IMR-90 (cell line): ENCODE measurements at regions of chr2 and their contacts with region 1.

Region 1: GRCh38 chr2:14634201-14634884 is 1.8 kb downstream of the LRATD1 start:
- DNase-seq: peak; percentile 54
- ATAC-seq: peak; percentile 62
- H3K4me3 ChIP-seq: peak overlapping the region; percentile 38
- H3K27ac ChIP-seq: no peak overlapping the region
- H3K4me1 ChIP-seq: no peaks in the 10 kb centered on the region; the same call in 1 of the 2 replicates
- H3K27me3 ChIP-seq: peaks cover 25% of the 10 kb centered on the region
- CTCF ChIP-seq: peak; percentile 62
- POLR2A ChIP-seq: no peak
- RAD21 ChIP-seq: peak; percentile 61

Region 2: GRCh38 chr2:14428056-14428455 is 206.3 kb before region 1 on chr2:
- CTCF ChIA-PET with region 1: no interaction called
- POLR2A ChIA-PET with region 1: no interaction called
- dilution Hi-C with region 1: no loop called
- in situ Hi-C with region 1: no loop called
- intact Hi-C with region 1: loop called (anchors 5 kb)
- DNase-seq: peak; percentile 53
- ATAC-seq: peak; percentile 40; the same call in 1 of the 2 replicates
- H3K4me3 ChIP-seq: no peak overlapping the region
- H3K27ac ChIP-seq: no peak overlapping the region
- H3K4me1 ChIP-seq: no peaks in the 10 kb centered on the region
- H3K27me3 ChIP-seq: no peaks in the 10 kb centered on the region
- CTCF ChIP-seq: peak; percentile 44
- POLR2A ChIP-seq: no peak
- RAD21 ChIP-seq: peak; percentile 64

Region 3: GRCh38 chr2:14492920-14493503 is 141.3 kb before region 1 on chr2:
- CTCF ChIA-PET with region 1: no interaction called
- POLR2A ChIA-PET with region 1: no interaction called
- dilution Hi-C with region 1: no loop called
- in situ Hi-C with region 1: no loop called
- intact Hi-C with region 1: loop called (anchors 10 kb)
- DNase-seq: peak; percentile 96
- ATAC-seq: peak; percentile 99
- H3K4me3 ChIP-seq: no peak overlapping the region
- H3K27ac ChIP-seq: peak overlapping the region; percentile 27
- H3K4me1 ChIP-seq: no peaks in the 10 kb centered on the region
- H3K27me3 ChIP-seq: no peaks in the 10 kb centered on the region
- CTCF ChIP-seq: no peak
- POLR2A ChIP-seq: no peak
- RAD21 ChIP-seq: peak; percentile 19; the same call in 1 of the 2 replicates

Region 4: DNA sequence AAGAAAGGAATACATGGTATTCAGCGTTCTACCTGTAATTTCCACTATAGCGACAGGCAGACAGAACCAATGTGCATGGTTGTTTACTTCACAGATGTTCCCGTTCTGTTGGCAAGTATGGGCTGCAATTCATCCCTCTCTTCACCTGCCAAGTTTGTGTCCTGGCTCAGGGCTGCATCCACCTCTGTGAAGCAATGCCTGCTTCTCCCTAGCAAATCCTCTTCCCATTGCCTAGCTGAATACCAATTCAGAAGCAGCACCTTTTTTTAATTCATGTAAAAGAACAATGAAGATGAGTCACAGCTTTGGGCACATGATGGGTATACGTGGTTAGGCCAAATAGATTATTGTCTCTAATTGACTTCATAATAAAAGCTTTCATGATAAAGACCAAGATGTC is 56.5 kb before region 1 on chr2:
- CTCF ChIA-PET with region 1: no interaction called
- POLR2A ChIA-PET with region 1: no interaction called
- dilution Hi-C with region 1: no loop called
- in situ Hi-C with region 1: no loop called
- intact Hi-C with region 1: no loop called
- DNase-seq: no peak
- ATAC-seq: no peak
- H3K4me3 ChIP-seq: no peak overlapping the region
- H3K27ac ChIP-seq: no peak overlapping the region
- H3K4me1 ChIP-seq: no peaks in the 10 kb centered on the region
- H3K27me3 ChIP-seq: no peaks in the 10 kb centered on the region
- CTCF ChIP-seq: no peak
- POLR2A ChIP-seq: no peak
- RAD21 ChIP-seq: no peak

Region 5: DNA sequence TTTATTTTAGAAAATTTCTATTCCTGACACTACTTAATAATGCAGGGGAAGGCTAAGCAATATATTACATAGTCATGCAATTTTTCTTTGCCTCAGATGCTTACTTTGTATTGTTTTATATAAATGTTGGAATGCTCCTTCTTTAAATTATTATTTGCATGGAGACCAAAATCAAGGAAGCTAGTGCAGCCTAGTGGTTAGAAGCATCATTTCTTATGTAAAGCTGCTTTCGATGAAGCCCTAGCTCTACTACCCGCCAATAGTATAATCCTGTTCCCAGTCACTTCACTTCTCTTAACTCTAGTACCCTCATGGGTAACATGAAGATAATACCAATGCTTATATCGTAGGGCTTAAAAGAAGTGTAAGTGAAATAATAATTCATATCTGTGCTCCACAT is 197.1 kb after region 1 on chr2:
- CTCF ChIA-PET with region 1: interaction called, 6 read pairs
- POLR2A ChIA-PET with region 1: no interaction called
- dilution Hi-C with region 1: no loop called
- in situ Hi-C with region 1: no loop called
- intact Hi-C with region 1: loop called (anchors 5 kb)
- DNase-seq: no peak
- ATAC-seq: no peak
- H3K4me3 ChIP-seq: no peak overlapping the region
- H3K27ac ChIP-seq: no peak overlapping the region
- H3K4me1 ChIP-seq: no peaks in the 10 kb centered on the region
- H3K27me3 ChIP-seq: no peaks in the 10 kb centered on the region
- CTCF ChIP-seq: no peak
- POLR2A ChIP-seq: no peak
- RAD21 ChIP-seq: peak; percentile 18; the same call in 1 of the 2 replicates

Region 6: DNA sequence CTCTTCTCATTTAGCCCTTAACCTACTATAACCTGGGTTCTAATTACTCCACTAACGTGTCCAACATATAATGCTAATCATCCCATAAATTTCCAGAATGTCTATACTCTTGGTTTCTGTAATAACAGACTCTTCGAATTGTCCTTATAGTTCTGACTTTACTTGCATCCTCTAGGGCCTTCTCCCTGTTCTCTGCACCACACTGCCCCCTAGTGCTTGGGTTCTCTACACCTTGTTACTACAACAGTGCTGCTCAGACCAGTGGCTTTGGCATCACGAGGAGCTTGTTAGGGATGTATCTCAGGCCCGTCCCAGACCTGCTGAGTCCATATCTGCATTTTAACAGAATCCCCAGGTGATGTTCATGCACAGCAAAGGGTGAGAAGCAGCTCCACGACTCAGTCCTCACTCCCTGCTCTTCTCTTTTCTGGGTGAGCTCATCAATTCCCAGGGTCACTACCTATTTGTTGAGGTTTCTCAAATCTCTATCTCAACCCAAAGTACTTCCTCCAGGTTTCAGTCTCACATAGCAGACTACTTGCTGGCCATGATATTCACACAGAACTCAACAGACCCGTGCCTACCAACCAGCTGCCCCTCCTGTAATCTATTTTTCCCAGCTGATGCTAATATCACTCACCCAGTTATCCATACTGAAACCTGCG is 942.9 kb after region 1 on chr2:
- CTCF ChIA-PET with region 1: interaction called, 4 read pairs
- POLR2A ChIA-PET with region 1: no interaction called
- dilution Hi-C with region 1: no loop called
- in situ Hi-C with region 1: no loop called
- intact Hi-C with region 1: loop called (anchors 5 kb)
- DNase-seq: peak; percentile 78
- ATAC-seq: peak; percentile 98
- H3K4me3 ChIP-seq: no peak overlapping the region
- H3K27ac ChIP-seq: no peak overlapping the region
- H3K4me1 ChIP-seq: no peaks in the 10 kb centered on the region
- H3K27me3 ChIP-seq: no peaks in the 10 kb centered on the region
- CTCF ChIP-seq: peak; percentile 84
- POLR2A ChIP-seq: no peak
- RAD21 ChIP-seq: peak; percentile 91